CD8-positive, alpha-beta T cell (primary cell): ENCODE measurements at regions of chr14 and their contacts with region 1.

Region 1: GRCh38 chr14:91078095-91078737 is 17.8 kb upstream of the RPS6KA5 start:
- DNase-seq: peak in 6 of 9 experiments; percentile 22 to 86 (median 57)
- ATAC-seq: peak; percentile 98
- H3K4me3 ChIP-seq: peak overlapping the region in 1 of 2 experiments; percentile 8
- H3K4me3 Mint-ChIP-seq: peak overlapping the region; percentile 59
- H3K27ac ChIP-seq: peak overlapping the region in 1 of 2 experiments; percentile 9
- H3K27ac Mint-ChIP-seq: peak overlapping the region; percentile 84
- H3K4me1 ChIP-seq: peaks cover 25% of the 10 kb centered on the region
- H3K4me1 Mint-ChIP-seq: peaks cover 30% of the 10 kb centered on the region
- H3K27me3 ChIP-seq: no peaks in the 10 kb centered on the region
- H3K27me3 Mint-ChIP-seq: no peaks in the 10 kb centered on the region
- CTCF ChIP-seq: no peak

Region 2: DNA sequence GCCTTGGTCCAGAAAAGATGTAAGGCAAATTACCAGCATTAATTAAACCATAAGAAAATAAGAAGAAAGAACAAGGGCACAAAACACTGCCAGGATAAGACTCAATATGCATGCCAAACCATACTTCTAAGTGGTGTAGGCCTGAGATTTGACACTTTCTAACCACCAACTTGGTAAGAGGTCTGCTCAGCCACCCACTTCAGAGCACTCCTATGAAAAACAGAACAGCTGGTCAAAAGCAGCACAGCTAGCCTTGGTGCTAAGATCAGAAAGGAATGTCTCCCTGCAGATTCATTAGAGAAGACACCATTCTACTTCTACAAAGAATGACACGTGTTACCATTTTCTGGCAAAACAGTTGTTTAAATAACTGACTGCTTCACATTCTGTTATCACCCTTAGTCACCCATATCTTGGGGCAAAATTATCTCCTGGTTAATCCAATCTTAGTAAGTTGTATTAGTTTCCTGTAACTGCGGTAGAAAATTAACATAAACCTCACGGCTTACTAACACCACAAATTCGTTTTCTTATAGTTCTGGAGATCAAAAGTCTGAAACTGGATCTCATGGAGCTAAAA is 31.0 kb before region 1 on chr14:
- CTCF ChIA-PET with region 1: no interaction called
- POLR2A ChIA-PET with region 1: interaction called, 3 read pairs
- intact Hi-C with region 1: loop called in 1 of 2 experiments (anchors 1 kb)
- DNase-seq: peak in 2 of 9 experiments; percentile 46 to 63
- ATAC-seq: peak; percentile 44
- H3K4me3 ChIP-seq: no peak overlapping the region
- H3K4me3 Mint-ChIP-seq: no peak overlapping the region
- H3K27ac ChIP-seq: no peak overlapping the region
- H3K27ac Mint-ChIP-seq: no peak overlapping the region
- H3K4me1 ChIP-seq: peaks cover 22% of the 10 kb centered on the region
- H3K4me1 Mint-ChIP-seq: peaks cover 45% of the 10 kb centered on the region
- H3K27me3 ChIP-seq: no peaks in the 10 kb centered on the region
- H3K27me3 Mint-ChIP-seq: no peaks in the 10 kb centered on the region
- CTCF ChIP-seq: no peak

Region 3: DNA sequence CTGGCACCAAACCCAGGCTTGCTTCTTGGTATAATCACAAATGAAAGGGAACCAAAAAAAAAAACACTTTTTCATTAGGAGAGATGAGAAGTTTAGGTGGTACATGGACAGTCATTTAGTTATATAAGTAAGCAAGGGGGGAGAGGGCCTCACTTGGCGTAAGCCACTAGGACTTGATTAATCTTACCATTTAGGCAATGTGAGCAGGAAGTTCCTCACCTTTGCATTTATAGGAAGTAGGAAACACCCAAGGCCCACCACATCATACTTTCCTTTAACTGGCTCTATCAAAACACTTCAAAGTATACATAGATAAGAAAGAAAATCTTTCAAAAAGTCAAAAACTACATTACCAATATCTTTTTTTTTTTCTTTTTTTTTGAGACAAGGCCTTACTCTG is 11.0 kb before region 1 on chr14:
- CTCF ChIA-PET with region 1: interaction called, 8 read pairs
- POLR2A ChIA-PET with region 1: interaction called, 7 read pairs
- intact Hi-C with region 1: loop called (anchors 1 kb)
- DNase-seq: peak in 3 of 9 experiments; percentile 11 to 70 (median 44)
- ATAC-seq: peak; percentile 58
- H3K4me3 ChIP-seq: no peak overlapping the region
- H3K4me3 Mint-ChIP-seq: peak overlapping the region; percentile 55
- H3K27ac ChIP-seq: peak overlapping the region; percentile 44 to 59
- H3K27ac Mint-ChIP-seq: peak overlapping the region; percentile 89
- H3K4me1 ChIP-seq: peaks cover 62% of the 10 kb centered on the region
- H3K4me1 Mint-ChIP-seq: peaks cover 67% of the 10 kb centered on the region
- H3K27me3 ChIP-seq: no peaks in the 10 kb centered on the region
- H3K27me3 Mint-ChIP-seq: no peaks in the 10 kb centered on the region
- CTCF ChIP-seq: no peak

Region 4: GRCh38 chr14:91114079-91115065 is 36.2 kb after region 1 on chr14:
- CTCF ChIA-PET with region 1: interaction called, 3 read pairs
- POLR2A ChIA-PET with region 1: interaction called, 8 read pairs
- intact Hi-C with region 1: loop called in 1 of 2 experiments (anchors 2 kb)
- DNase-seq: peak; percentile 22 to 89 (median 65)
- ATAC-seq: peak; percentile 78
- H3K4me3 ChIP-seq: peak overlapping the region; percentile 68 to 93
- H3K4me3 Mint-ChIP-seq: peak overlapping the region; percentile 90
- H3K27ac ChIP-seq: peak overlapping the region; percentile 84 to 88
- H3K27ac Mint-ChIP-seq: peak overlapping the region; percentile 95
- H3K4me1 ChIP-seq: peaks cover 61% of the 10 kb centered on the region
- H3K4me1 Mint-ChIP-seq: peaks cover 68% of the 10 kb centered on the region
- H3K27me3 ChIP-seq: no peaks in the 10 kb centered on the region
- H3K27me3 Mint-ChIP-seq: no peaks in the 10 kb centered on the region
- CTCF ChIP-seq: no peak

Region 5: GRCh38 chr14:91218014-91218413 is 139.8 kb after region 1 on chr14:
- CTCF ChIA-PET with region 1: no interaction called
- POLR2A ChIA-PET with region 1: no interaction called
- intact Hi-C with region 1: no loop called
- DNase-seq: no peak
- ATAC-seq: no peak
- H3K4me3 ChIP-seq: no peak overlapping the region
- H3K4me3 Mint-ChIP-seq: no peak overlapping the region
- H3K27ac ChIP-seq: no peak overlapping the region
- H3K27ac Mint-ChIP-seq: no peak overlapping the region
- H3K4me1 ChIP-seq: no peaks in the 10 kb centered on the region
- H3K4me1 Mint-ChIP-seq: peaks cover 13% of the 10 kb centered on the region
- H3K27me3 ChIP-seq: no peaks in the 10 kb centered on the region
- H3K27me3 Mint-ChIP-seq: no peaks in the 10 kb centered on the region
- CTCF ChIP-seq: no peak